ENCODE measurements at regions of chr10 and their contacts with region 1.

Region 1: GRCh38 chr10:25766687-25767221 is 167.3 kb upstream of the MYO3A start:
- DNase-seq: no peak

Region 2: DNA sequence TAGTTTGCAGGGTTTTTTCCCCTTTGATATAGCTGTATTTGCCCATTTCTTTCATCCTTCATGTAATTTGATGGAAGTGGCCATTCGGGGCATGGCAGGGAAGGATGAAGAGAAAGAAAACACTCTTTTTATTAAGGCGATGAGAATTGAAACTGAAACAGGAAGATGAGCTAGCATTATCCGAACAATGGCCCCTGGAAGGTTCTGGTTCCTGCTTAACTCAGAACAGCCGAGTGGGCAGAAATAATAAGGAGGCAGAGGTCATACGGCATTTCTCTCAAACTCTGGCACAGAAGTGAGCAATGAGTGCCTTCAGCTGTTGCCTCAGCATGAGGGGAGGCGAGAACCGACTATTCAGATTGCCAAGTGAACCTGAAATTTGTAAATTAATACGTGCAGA is 54.1 kb after region 1 on chr10:
- intact Hi-C with region 1: loop called in 1 of 2 experiments (anchors 2 kb)
- DNase-seq: no peak

Measured in posterior vena cava (tissue), 2 donors.